ENCODE measurements at regions of chr17 and their contacts with region 1.

Region 1: DNA sequence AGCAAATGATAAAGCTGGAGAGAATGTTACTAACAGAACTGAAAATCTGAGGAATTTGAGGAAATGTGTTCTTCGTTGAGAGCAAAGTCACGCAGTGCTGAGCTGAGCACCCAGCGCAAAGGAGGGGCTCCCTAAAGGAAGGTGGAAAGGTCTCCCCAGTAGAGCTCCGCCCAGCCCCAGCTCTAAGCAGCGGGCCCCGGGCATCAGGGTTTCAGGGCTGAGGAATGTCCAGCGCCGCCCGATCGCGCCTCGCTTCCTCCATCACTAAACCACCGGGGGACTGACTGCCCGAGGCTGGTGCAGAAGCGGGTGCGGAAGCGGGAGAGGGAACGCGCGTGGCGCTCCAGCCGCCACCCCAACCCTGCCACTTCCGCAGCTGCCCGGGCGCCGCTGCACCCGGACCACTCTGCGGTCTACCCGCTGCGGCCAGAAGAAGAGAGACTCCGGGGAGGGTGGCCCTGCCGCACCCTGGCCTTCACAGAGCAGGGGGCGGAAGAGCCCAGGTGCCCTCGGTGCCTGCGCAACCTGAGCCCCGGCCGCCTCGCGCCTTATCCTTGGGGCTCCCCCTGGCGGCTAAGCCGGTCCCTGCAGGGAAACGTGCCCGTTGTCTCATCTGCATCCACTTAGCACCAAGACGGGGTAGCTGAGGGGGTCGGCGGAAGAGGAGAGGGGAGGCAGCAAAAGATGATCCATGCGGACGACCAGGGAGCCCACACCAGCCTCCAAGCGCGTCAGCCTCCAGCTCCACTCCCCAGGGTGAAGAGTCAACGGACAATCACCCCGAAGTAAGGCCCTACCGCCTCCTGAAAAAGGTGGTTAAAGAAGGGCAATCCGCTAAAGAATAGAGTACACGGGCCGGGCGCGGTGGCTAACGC is 12.4 kb upstream of the GUCY2D start:
- DNase-seq: peak; percentile 79 to 98 (median 93)
- ATAC-seq: peak; percentile 91
- H3K4me3 ChIP-seq: peak overlapping the region; percentile 55
- H3K4me3 Mint-ChIP-seq: peak overlapping the region; percentile 82
- H3K27ac ChIP-seq: peak overlapping the region; percentile 24 to 78
- H3K27ac Mint-ChIP-seq: peak overlapping the region; percentile 83
- H3K4me1 ChIP-seq: peaks cover 18% of the 10 kb centered on the region
- H3K4me1 Mint-ChIP-seq: peaks cover 26% of the 10 kb centered on the region
- H3K27me3 ChIP-seq: no peaks in the 10 kb centered on the region
- H3K27me3 Mint-ChIP-seq: peaks cover 4% of the 10 kb centered on the region
- CTCF ChIP-seq: peak; percentile 94

Region 2: GRCh38 chr17:7740481-7741001 is 249.5 kb before region 1 on chr17:
- CTCF ChIA-PET with region 1: interaction called, 26 read pairs
- POLR2A ChIA-PET with region 1: no interaction called
- intact Hi-C with region 1: loop called (anchors 1 to 2 kb)
- DNase-seq: no peak
- ATAC-seq: no peak
- H3K4me3 ChIP-seq: no peak overlapping the region
- H3K4me3 Mint-ChIP-seq: no peak overlapping the region
- H3K27ac ChIP-seq: no peak overlapping the region
- H3K27ac Mint-ChIP-seq: no peak overlapping the region
- H3K4me1 ChIP-seq: no peaks in the 10 kb centered on the region
- H3K4me1 Mint-ChIP-seq: no peaks in the 10 kb centered on the region
- H3K27me3 ChIP-seq: peaks cover 6 to 12% of the 10 kb centered on the region in 2 experiments
- H3K27me3 Mint-ChIP-seq: peaks cover 39% of the 10 kb centered on the region
- CTCF ChIP-seq: no peak

Region 3: DNA sequence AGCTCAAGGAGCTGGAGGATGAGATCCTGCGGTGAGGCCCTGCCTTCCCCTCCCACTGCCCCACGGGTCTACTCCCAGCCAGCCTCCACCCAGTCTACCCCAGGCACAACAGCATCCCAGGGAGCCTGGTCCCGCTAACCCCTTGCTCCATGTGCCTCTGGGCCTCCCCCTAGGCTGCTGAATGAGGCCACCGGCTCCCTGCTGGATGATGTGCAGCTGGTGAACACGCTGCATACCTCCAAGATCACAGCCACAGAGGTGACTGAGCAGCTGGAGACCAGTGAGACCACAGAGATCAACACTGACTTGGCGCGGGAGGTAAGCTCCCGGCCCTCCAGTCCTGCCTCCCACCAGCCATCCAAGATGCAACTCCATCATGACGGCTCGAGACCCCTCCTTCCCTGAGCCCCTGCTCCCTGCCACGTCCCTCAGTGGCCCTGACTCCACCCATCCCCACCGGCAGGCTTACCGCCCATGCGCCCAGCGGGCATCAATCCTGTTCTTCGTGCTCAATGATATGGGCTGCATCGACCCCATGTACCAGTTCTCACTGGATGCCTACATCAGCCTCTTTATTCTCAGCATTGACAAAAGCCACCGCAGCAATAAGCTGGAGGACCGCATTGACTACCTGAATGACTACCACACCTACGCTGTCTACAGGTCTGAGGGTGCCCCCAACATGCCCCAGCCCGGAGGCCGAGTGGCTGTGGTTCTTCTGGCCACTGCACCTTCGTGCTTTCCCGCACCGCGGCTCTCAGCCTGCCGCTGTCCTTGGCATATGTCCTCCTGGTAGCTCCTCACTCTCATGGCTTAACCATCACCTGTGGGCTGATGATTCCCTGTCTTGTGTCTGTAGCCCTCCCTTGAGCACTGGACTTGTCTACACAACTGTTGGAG is 171.0 kb before region 1 on chr17:
- CTCF ChIA-PET with region 1: interaction called, 7 read pairs
- POLR2A ChIA-PET with region 1: no interaction called
- intact Hi-C with region 1: loop called (anchors 1 kb)
- DNase-seq: no peak
- ATAC-seq: no peak
- H3K4me3 ChIP-seq: no peak overlapping the region
- H3K4me3 Mint-ChIP-seq: no peak overlapping the region
- H3K27ac ChIP-seq: no peak overlapping the region
- H3K27ac Mint-ChIP-seq: no peak overlapping the region
- H3K4me1 ChIP-seq: no peaks in the 10 kb centered on the region
- H3K4me1 Mint-ChIP-seq: no peaks in the 10 kb centered on the region
- H3K27me3 ChIP-seq: no peaks in the 10 kb centered on the region
- H3K27me3 Mint-ChIP-seq: no peaks in the 10 kb centered on the region
- CTCF ChIP-seq: no peak

Region 4: DNA sequence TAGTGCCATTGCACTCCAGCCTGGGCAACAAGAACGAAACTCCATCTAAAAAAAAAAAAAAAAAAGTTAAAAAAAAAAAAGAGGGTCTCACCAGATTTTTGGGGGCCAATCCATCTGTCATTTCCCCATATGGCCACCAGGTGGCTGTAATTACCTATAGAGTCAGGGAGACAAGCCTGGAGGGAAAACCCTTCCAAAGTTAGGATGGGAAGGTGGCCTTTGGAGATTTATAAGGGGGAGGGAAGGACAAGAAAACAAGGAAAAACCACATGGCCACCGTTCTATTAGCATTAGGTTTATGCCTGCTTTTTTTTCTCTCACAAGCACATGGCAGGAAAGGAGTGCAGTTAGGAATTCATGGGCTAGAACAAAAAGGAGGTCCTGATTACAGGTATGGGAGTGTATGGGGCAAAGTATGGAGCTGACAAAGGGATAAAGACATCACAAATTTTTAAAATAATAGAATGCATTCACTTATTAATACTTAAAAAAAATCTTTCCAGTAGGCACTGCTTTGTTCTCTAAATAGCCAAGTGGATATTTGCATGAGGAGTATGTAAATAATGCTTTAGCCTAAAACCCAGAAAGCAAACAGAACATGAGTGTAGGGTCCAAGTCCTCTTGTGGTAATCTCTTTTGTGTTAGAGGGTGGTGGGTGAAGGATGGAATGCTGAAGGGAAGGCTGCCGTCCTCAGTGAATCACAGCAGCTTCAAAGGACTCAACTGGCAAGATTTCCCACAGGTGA is 127.2 kb before region 1 on chr17:
- CTCF ChIA-PET with region 1: interaction called, 48 read pairs
- POLR2A ChIA-PET with region 1: interaction called, 14 read pairs
- intact Hi-C with region 1: loop called (anchors 1 kb)
- DNase-seq: peak in 9 of 14 experiments; percentile 31 to 70 (median 44)
- ATAC-seq: no peak
- H3K4me3 ChIP-seq: no peak overlapping the region
- H3K4me3 Mint-ChIP-seq: no peak overlapping the region
- H3K27ac ChIP-seq: no peak overlapping the region
- H3K27ac Mint-ChIP-seq: no peak overlapping the region
- H3K4me1 ChIP-seq: peaks cover 17% of the 10 kb centered on the region
- H3K4me1 Mint-ChIP-seq: peaks cover 18% of the 10 kb centered on the region
- H3K27me3 ChIP-seq: no peaks in the 10 kb centered on the region
- H3K27me3 Mint-ChIP-seq: no peaks in the 10 kb centered on the region
- CTCF ChIP-seq: peak; percentile 97

Region 5: DNA sequence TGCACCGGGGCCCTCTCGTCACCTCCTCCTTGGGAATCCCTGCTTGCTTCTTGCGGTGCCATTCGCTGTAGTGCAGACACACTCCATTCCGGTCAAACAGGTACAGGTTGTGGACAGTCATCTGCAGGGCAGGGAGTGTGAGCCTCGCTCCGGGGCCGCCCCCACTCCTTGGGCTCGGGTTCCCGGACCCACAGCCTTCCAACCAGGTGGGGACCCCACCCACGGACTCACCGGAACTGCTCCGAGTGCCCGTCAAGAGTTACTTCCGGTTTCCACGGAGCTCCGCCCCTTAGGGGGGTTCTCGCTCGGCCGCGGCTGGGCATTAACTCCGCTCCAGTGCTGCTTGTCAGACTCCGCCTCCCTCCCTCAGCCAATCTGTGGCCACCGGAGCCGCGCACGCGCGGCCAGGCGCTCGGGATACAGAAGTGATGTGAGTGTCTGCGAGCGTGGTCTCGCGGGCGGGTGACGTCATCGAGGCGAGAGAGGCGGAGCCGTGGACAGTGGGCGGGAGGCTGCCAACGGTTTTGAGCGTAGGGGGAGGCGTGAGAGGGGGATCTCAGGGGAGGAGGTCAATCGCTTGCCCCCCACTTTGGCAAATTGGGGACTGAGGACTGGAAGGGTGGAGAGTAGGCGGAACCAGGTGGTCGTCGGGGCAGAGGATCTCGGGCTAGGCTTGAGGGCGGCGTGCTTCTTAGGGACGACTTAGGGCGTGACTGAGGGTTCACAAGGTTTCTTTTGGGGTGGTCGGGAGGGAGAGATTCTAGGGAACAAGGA is 58.1 kb before region 1 on chr17 and contains the starts of genes CNTROB and TRAPPC1:
- CTCF ChIA-PET with region 1: interaction called, 12 read pairs
- POLR2A ChIA-PET with region 1: interaction called, 16 read pairs
- intact Hi-C with region 1: no loop called
- DNase-seq: peak; percentile 97 to 100 (median 99)
- ATAC-seq: peak; percentile 92
- H3K4me3 ChIP-seq: peak within 1 kb of the TSS; percentile 94
- H3K4me3 Mint-ChIP-seq: peak within 1 kb of the TSS; percentile 97
- H3K27ac ChIP-seq: peak within 1 kb of the TSS; percentile 83
- H3K27ac Mint-ChIP-seq: peak within 1 kb of the TSS; percentile 90
- H3K4me1 ChIP-seq: peaks cover 40% of the 10 kb centered on the region
- H3K4me1 Mint-ChIP-seq: peaks cover 49% of the 10 kb centered on the region
- H3K27me3 ChIP-seq: no peaks in the 10 kb centered on the region
- H3K27me3 Mint-ChIP-seq: no peaks in the 10 kb centered on the region
- CTCF ChIP-seq: no peak
- total RNA-seq, gene CNTROB: 20.6 to 21.9 TPM
- total RNA-seq, gene TRAPPC1: 39.3 to 39.5 TPM